Common myeloid progenitor, CD34-positive (primary cell): ENCODE measurements at regions of chr1 and their contacts with region 1.

Region 1: GRCh38 chr1:30911046-30911954 is 2.7 kb upstream of the SDC3 start:
- DNase-seq: peak; percentile 62 to 76 (median 69)
- H3K4me3 ChIP-seq: no peak overlapping the region
- H3K27ac ChIP-seq: no peak overlapping the region
- H3K4me1 ChIP-seq: peaks cover 0 to 29% (median 16%) of the 10 kb centered on the region in 4 experiments
- H3K27me3 ChIP-seq: peaks cover 0 to 44% (median 33%) of the 10 kb centered on the region in 5 experiments

Region 2: DNA sequence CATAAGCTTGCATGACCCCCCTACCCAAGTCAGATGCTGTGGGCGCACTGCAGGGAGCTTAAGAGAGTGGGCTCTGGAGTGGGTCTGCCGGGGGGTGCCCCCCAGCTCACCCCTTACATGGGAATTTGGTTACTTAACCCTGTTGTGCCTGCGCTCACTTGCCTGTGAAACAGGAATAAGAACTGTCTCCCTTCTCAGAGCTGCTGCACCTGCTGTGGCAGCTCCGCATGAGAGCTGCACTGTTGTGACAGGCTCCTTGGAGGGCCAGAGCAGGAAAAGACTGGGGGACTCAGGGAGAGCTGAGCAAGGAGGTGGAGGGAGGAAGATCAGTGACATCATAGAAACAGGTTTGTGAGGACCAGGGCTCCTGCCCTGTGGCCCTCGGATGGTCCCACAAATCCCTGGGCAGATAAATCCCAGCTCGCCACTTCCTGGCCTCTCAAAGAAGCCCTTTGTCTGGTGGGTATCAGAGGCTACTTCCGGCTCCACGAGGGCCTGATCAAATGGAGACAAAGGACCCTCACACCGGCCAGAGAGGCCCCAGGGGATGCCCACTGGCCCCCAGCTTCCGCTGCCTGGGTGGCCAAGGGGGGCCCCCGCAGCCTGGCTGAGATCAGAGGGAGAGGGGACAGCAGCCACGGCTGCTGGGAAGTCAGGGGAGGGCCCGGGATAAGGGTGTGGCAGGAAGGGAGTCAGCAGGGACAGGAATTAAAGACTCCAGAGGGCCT is 124.9 kb before region 1 on chr1:
- CTCF ChIA-PET with region 1: interaction called, 96 read pairs
- POLR2A ChIA-PET with region 1: no interaction called
- DNase-seq: no peak
- H3K4me3 ChIP-seq: no peak overlapping the region
- H3K27ac ChIP-seq: no peak overlapping the region
- H3K4me1 ChIP-seq: peaks cover 0 to 28% (median 12%) of the 10 kb centered on the region in 4 experiments
- H3K27me3 ChIP-seq: peaks cover 0 to 12% (median 5%) of the 10 kb centered on the region in 5 experiments

Region 3: GRCh38 chr1:30809514-30810263 is 101.6 kb before region 1 on chr1:
- CTCF ChIA-PET with region 1: interaction called, 252 read pairs
- POLR2A ChIA-PET with region 1: no interaction called
- DNase-seq: peak in 2 of 3 donors; percentile 43 to 48
- H3K4me3 ChIP-seq: no peak overlapping the region
- H3K27ac ChIP-seq: no peak overlapping the region
- H3K4me1 ChIP-seq: peaks cover 0 to 3% (median 1%) of the 10 kb centered on the region in 4 experiments
- H3K27me3 ChIP-seq: peaks cover 7 to 93% (median 56%) of the 10 kb centered on the region in 5 experiments

Region 4: DNA sequence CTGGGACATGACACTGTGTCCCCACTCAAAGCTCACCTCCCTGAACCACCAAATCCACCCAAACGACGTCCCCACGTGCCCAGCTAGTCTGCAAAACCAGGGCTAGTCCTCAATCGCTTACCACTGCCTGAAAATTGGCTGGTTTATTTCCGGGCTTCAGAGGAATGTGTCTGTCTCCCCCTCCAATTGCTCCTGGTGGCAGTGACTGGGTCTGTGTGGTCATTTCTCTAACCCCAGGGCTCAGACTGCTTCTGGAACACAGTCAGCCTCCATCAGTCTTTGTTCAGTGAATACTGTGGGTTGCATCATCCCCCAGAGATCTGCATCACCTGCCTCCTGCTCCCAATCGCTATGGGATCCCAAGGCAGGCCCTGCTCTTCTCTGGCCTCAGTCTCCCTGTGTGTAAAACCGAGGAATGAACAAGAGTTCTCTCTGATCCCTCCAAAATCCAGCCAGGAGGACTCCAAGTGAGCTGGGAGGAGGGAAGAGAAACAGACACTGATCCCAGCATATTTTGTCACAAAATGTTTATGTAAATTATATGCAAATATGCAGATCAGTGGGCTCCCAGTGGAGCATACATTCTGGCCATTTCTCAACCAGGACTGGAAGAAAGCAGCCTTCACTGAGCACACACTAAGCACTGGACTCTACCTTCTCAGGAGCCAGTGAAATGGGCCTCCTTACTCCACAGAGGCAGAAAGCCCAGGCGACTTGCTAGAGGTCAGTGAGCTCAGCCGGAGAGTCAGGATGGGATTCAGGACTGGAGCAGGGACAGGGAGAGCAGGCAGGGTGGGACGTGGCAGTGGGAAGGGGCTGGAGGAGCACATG is 23.6 kb before region 1 on chr1:
- CTCF ChIA-PET with region 1: interaction called, 18 read pairs
- POLR2A ChIA-PET with region 1: no interaction called
- DNase-seq: no peak
- H3K4me3 ChIP-seq: no peak overlapping the region
- H3K27ac ChIP-seq: no peak overlapping the region
- H3K4me1 ChIP-seq: peaks cover 0 to 4% (median 2%) of the 10 kb centered on the region in 4 experiments
- H3K27me3 ChIP-seq: peaks cover 0 to 87% (median 38%) of the 10 kb centered on the region in 5 experiments

Region 5: GRCh38 chr1:30895944-30896660 is 15.2 kb before region 1 on chr1:
- CTCF ChIA-PET with region 1: interaction called, 17 read pairs
- POLR2A ChIA-PET with region 1: no interaction called
- DNase-seq: no peak
- H3K4me3 ChIP-seq: no peak overlapping the region
- H3K27ac ChIP-seq: no peak overlapping the region
- H3K4me1 ChIP-seq: peaks cover 0 to 4% (median 2%) of the 10 kb centered on the region in 4 experiments
- H3K27me3 ChIP-seq: peaks cover 0 to 85% (median 28%) of the 10 kb centered on the region in 5 experiments

Region 6: GRCh38 chr1:30929135-30929889 is 18.0 kb after region 1 on chr1:
- CTCF ChIA-PET with region 1: interaction called, 37 read pairs
- POLR2A ChIA-PET with region 1: interaction called, 4 read pairs
- DNase-seq: peak; percentile 39 to 70 (median 59)
- H3K4me3 ChIP-seq: no peak overlapping the region
- H3K27ac ChIP-seq: no peak overlapping the region
- H3K4me1 ChIP-seq: no peaks in the 10 kb centered on the region
- H3K27me3 ChIP-seq: no peaks in the 10 kb centered on the region